ENCODE measurements at regions of chr6 and their contacts with region 1.

Region 1: DNA sequence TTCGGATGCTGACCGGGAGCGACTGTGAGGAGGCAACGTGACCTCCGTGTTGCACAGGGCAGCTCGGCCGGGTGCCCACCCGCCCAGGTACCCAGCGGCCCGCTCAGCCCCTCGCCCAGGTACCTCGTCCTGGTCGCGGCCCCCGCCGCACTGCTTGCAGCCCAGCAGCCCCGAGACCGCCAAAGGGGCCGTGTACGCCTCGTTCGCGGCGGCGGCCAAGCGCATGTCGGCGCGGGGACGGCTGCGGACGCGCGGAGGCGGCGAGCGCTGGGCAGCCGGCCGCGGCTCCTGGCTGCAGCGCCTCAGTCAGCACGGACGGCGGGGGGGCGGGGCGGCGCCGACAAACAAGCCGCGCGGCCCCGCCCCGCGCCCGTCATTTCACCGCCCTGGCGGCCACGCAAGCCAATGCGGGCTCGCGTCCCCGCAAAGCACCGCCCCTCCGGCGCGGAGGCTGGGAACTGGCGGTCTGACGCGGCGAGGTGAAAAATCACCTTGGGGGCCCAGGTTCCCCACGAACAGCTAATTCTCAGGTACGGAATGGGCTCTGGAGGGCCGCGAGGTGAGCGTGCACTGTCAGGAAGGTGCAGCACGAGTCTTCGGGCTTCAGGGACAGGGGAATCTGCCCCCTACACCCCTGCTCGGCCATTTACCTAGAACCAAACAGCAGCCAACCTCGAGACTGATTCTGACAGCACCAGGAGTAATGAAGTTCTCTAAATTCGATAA is 85.2 kb downstream of the SESN1 start:
- DNase-seq: peak; percentile 97
- H3K4me3 ChIP-seq: peak overlapping the region; percentile 43 to 83 (median 67)
- H3K27ac ChIP-seq: peak overlapping the region; percentile 92 to 100 (median 97)
- H3K4me1 ChIP-seq: peaks cover 59 to 65% of the 10 kb centered on the region in 2 donors
- H3K27me3 ChIP-seq: no peaks in the 10 kb centered on the region
- CTCF ChIP-seq: peak in 3 of 6 experiments; percentile 32 to 59 (median 53)
- POLR2A ChIP-seq: peak; percentile 41 to 99

Region 2: DNA sequence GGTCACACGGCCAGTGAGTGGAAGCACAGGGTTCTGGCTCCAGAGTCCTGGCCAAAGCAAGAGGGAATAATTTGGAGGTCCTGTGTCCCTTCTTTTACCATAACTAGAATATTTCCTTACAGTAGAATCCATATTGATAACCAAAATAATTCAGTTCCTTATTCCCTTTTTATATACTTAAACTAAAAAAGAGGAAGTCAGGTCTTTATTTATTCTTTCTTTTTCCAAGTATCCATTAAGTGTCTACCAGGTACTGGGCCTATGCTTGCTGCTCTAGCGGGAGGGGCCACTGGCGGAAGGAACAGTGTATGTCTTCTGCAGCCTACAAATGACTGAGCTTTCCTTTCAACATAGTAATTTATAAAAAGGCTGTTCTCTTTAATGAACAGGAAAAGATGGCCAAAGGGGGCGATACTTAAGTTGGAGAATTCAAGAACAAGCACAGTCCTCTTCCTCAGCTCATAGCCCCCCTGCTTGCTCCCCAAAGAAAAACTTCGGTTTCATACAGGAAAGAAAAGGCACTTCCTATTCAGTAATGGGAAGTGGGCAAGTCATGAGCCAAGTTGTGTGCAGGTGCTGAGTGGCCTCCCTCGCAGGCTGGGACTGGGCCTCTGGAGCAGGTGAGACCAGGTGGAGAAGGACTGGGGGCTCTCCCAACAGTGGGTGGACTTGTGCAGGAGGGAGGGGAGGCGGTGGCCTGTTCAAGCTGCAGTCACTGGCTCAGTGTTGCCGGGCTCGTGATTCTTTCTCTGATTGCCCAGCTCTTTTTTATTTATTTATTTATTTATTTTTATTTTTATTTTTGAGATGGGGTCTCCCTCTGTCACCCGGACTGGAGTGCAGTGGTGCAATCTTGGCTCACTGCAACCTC is 50.3 kb before region 1 on chr6:
- intact Hi-C with region 1: loop called (anchors 10 kb)
- DNase-seq: no peak
- H3K4me3 ChIP-seq: no peak overlapping the region
- H3K27ac ChIP-seq: no peak overlapping the region
- H3K4me1 ChIP-seq: peaks cover 0 to 8% of the 10 kb centered on the region in 2 donors
- H3K27me3 ChIP-seq: no peaks in the 10 kb centered on the region
- CTCF ChIP-seq: no peak
- POLR2A ChIP-seq: no peak

Region 3: GRCh38 chr6:109059571-109060021 is 50.2 kb after region 1 on chr6:
- intact Hi-C with region 1: loop called (anchors 10 kb)
- DNase-seq: no peak
- H3K4me3 ChIP-seq: no peak overlapping the region
- H3K27ac ChIP-seq: peak overlapping the region in 2 of 3 donors; percentile 47 to 61
- H3K4me1 ChIP-seq: peaks cover 22 to 28% of the 10 kb centered on the region in 2 donors
- H3K27me3 ChIP-seq: no peaks in the 10 kb centered on the region
- CTCF ChIP-seq: peak in 2 of 6 experiments; percentile 25 to 41
- POLR2A ChIP-seq: no peak

Region 4: DNA sequence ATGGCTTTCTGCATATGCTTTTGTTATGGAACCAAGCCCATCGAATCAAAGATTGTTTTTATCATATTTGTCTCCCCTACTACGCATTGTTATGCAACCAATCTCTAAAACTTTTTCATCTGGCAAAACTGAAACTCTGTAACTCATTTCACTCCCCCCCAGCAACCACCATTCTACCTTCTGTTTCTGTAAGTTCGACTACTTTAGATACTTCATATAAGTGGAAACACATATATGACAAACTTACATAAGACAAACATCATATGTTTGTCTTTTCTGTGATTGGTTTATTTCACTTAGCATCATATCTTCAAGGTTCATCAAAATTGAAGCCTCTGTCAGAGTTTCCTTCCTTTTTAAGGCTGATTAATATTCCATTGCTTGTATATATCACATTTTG is 120.7 kb after region 1 on chr6:
- intact Hi-C with region 1: no loop called
- DNase-seq: no peak
- H3K4me3 ChIP-seq: no peak overlapping the region
- H3K27ac ChIP-seq: no peak overlapping the region
- H3K4me1 ChIP-seq: no peaks in the 10 kb centered on the region
- H3K27me3 ChIP-seq: no peaks in the 10 kb centered on the region
- CTCF ChIP-seq: no peak
- POLR2A ChIP-seq: no peak